ENCODE measurements at regions of chr9 and their contacts with region 1.

Region 1: DNA sequence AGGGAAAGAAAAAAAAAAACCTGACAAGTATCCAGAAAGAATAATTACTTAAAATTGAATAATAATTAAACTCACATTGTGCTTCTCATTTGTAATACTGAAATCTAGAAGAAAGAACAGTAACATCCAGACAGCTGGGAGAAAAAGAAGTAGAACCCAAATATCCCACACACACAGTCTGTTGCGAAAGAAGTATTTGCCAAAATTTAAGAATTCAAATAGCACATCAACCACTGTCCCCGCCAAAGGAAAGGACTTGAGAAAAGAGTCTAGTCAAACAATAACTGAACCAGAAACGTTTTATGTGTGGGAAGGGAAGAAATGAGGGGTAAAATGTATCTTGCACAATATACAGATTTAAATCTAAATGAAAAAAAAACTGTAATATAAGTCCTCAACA is 202.8 kb downstream of the MLLT3 start:
- DNase-seq: no peak
- H3K4me3 ChIP-seq: no peak overlapping the region
- CTCF ChIP-seq: no peak

Region 2: GRCh38 chr9:20355022-20355421 is 64.5 kb before region 1 on chr9:
- in situ Hi-C with region 1: no loop called
- DNase-seq: no peak
- H3K4me3 ChIP-seq: no peak overlapping the region
- CTCF ChIP-seq: no peak

Region 3: GRCh38 chr9:20479419-20480155 is 60.1 kb after region 1 on chr9:
- in situ Hi-C with region 1: loop called (anchors 10 kb)
- DNase-seq: no peak
- H3K4me3 ChIP-seq: no peak overlapping the region
- CTCF ChIP-seq: no peak